Panc1 (cell line): ENCODE measurements at regions of chr7 and their contacts with region 1.

Region 1: GRCh38 chr7:95139922-95140321 is 184.4 kb downstream of the PON1 start:
- DNase-seq: no peak
- ATAC-seq: no peak
- H3K4me3 ChIP-seq: no peak overlapping the region
- H3K27ac ChIP-seq: no peak overlapping the region
- H3K4me1 ChIP-seq: no peaks in the 10 kb centered on the region
- H3K27me3 ChIP-seq: no peaks in the 10 kb centered on the region
- CTCF ChIP-seq: no peak

Region 2: DNA sequence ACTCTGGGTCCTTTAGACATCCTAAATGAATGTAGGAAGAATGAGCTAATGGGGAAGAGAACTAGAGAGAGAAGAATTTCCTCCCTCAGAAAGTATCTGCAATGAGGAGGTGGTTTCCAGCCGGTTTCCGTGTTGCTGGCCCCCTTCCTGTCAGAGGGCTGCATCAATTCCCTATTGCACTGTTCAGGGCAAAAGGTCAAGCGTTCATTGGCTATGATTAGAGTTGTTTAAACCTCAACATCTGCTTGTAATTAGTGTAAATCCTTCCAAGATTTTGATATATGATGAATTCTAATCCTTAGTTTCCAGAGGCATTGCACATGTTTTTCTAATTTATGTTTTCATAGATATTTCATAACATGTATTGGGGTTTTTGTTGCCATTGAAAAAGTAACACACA is 376.7 kb before region 1 on chr7:
- CTCF ChIA-PET with region 1: interaction called, 12 read pairs
- POLR2A ChIA-PET with region 1: no interaction called
- in situ Hi-C with region 1: no loop called
- intact Hi-C with region 1: no loop called
- DNase-seq: no peak
- ATAC-seq: no peak
- H3K4me3 ChIP-seq: no peak overlapping the region
- H3K27ac ChIP-seq: no peak overlapping the region
- H3K4me1 ChIP-seq: no peaks in the 10 kb centered on the region
- H3K27me3 ChIP-seq: no peaks in the 10 kb centered on the region
- CTCF ChIP-seq: no peak